Ovary (tissue), 10 donors: ENCODE measurements at regions of chr14 and their contacts with region 1.

Region 1: DNA sequence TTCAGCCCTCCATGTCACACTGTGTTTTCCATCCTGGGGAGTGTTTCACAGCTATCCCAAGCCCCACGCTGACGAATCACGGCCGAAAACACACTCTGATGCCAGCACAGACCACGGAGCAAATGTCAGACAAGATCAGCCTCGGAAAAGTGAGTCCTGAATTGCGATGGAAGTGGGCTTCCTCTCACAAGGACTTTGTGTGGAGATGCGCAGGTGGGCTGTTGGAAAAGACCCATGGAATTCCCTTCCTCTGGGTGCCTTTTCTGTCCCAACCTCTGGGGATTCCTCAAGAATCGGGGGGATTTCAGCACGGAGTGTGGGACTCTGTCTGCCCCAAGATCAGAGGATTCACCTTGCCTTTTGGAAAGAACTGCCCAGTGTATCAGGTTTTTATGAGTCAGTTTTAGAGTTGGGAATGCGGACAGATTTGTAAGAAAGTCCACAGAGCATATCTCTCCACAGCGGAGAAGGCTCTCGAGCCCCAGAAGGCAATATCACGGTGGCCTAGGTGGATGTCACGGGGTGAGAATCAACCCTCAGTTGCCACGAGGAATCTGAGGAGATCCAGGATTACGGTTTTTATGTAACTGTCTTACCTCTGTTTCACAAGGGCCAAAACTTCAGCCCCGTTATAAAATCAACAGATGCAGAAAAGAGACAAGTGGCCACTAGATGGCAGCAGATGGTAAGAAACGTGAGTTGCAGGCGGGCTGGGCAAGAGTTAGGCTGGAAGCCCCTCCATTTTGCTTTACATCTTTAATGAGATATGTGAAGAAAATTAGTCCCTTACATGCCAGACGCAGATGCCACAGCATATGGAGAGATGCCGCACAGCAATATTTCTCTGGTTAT is 201.9 kb downstream of the DAD1 start:
- DNase-seq: peak; percentile 51 to 81 (median 58)
- H3K4me3 ChIP-seq: no peak overlapping the region
- H3K27ac ChIP-seq: no peak overlapping the region
- H3K4me1 ChIP-seq: no peaks in the 10 kb centered on the region
- H3K27me3 ChIP-seq: no peaks in the 10 kb centered on the region
- CTCF ChIP-seq: peak; percentile 64 to 77 (median 68)
- EP300 ChIP-seq: no peak
- POLR2A ChIP-seq: no peak

Region 2: GRCh38 chr14:21748869-21749303 is 638.3 kb before region 1 on chr14:
- intact Hi-C with region 1: no loop called
- DNase-seq: no peak
- H3K4me3 ChIP-seq: no peak overlapping the region
- H3K27ac ChIP-seq: no peak overlapping the region
- H3K4me1 ChIP-seq: no peaks in the 10 kb centered on the region
- H3K27me3 ChIP-seq: no peaks in the 10 kb centered on the region
- CTCF ChIP-seq: no peak
- EP300 ChIP-seq: no peak
- POLR2A ChIP-seq: no peak

Region 3: GRCh38 chr14:22472935-22473854 is 86.0 kb after region 1 on chr14:
- intact Hi-C with region 1: loop called in 3 of 4 experiments (anchors 5 kb)
- DNase-seq: peak in 1 of 5 donors; percentile 33
- H3K4me3 ChIP-seq: no peak overlapping the region
- H3K27ac ChIP-seq: no peak overlapping the region
- H3K4me1 ChIP-seq: peaks cover 23% of the 10 kb centered on the region
- H3K27me3 ChIP-seq: no peaks in the 10 kb centered on the region
- CTCF ChIP-seq: peak in 1 of 3 donors; percentile 32
- EP300 ChIP-seq: no peak
- POLR2A ChIP-seq: no peak

Region 4: GRCh38 chr14:22549981-22550673 is 163.0 kb after region 1 on chr14:
- intact Hi-C with region 1: loop called in 2 of 4 experiments (anchors 5 kb)
- DNase-seq: no peak
- H3K4me3 ChIP-seq: no peak overlapping the region
- H3K27ac ChIP-seq: no peak overlapping the region
- H3K4me1 ChIP-seq: peaks cover 2% of the 10 kb centered on the region
- H3K27me3 ChIP-seq: no peaks in the 10 kb centered on the region
- CTCF ChIP-seq: no peak
- EP300 ChIP-seq: no peak
- POLR2A ChIP-seq: no peak